ENCODE measurements at regions of chr15 and their contacts with region 1.

Region 1: GRCh38 chr15:61157933-61158332 is 71.2 kb downstream of the RORA start:
- DNase-seq: no peak
- H3K4me3 ChIP-seq: no peak overlapping the region
- CTCF ChIP-seq: no peak

Region 2: DNA sequence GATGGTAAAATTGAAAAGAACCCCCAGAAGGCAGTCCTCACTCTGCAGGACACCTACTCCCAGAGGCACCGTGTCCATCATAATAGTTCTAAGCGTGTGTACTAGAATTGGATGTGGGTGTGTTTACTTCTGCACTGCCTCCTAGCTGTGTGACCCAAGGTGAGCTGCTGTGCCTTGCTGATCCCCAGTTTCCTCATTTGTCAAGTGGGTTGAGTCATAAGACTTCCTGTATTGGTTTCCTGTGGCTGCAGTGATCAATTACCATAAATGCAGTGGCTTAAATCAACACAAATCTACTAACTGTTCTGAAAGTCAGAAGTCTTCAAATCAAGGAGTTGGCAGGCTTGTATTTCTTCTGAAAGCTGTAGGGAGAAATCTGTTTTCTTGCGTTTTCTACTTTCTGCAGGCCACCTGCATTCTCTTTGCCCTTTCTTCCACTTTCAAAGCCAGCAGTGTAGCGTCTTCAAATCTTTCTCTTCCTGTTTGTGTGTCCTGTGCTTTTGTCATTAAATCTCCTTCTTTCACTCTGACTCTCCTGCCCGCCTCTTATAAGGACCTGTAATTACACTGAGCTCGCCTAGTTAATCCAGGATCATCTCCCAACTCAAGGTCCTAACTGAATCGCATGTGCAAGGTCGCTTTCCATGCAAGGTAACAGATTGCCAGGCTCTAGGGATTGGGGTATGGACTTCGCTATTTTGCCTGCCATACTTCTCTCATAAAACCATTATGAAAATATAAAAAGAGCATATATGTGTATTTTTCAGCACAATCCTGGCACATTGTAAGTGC is 12.2 kb after region 1 on chr15:
- CTCF ChIA-PET with region 1: interaction called, 10 read pairs
- POLR2A ChIA-PET with region 1: no interaction called
- DNase-seq: no peak
- H3K4me3 ChIP-seq: no peak overlapping the region
- CTCF ChIP-seq: no peak

Region 3: GRCh38 chr15:61318301-61318700 is 160.4 kb after region 1 on chr15:
- CTCF ChIA-PET with region 1: no interaction called
- POLR2A ChIA-PET with region 1: no interaction called
- DNase-seq: no peak
- H3K4me3 ChIP-seq: no peak overlapping the region
- CTCF ChIP-seq: no peak

Region 4: GRCh38 chr15:61613729-61614128 is 455.8 kb after region 1 on chr15:
- CTCF ChIA-PET with region 1: no interaction called
- POLR2A ChIA-PET with region 1: no interaction called
- DNase-seq: no peak
- H3K4me3 ChIP-seq: no peak overlapping the region
- CTCF ChIP-seq: no peak

Measured in AG04449 (cell line).